Activated CD4-positive, alpha-beta memory T cell treated with anti-CD3 and anti-CD28 coated beads for 36 hours (primary cell): ENCODE measurements at regions of chr17 and their contacts with region 1.

Region 1: GRCh38 chr17:416293-417206 is 63.9 kb upstream of the RPH3AL start:
- DNase-seq: peak; percentile 77
- H3K4me3 Mint-ChIP-seq: peak overlapping the region; percentile 83
- H3K27ac Mint-ChIP-seq: peak overlapping the region; percentile 96
- H3K4me1 Mint-ChIP-seq: peaks cover 76% of the 10 kb centered on the region
- H3K27me3 Mint-ChIP-seq: no peaks in the 10 kb centered on the region

Region 2: DNA sequence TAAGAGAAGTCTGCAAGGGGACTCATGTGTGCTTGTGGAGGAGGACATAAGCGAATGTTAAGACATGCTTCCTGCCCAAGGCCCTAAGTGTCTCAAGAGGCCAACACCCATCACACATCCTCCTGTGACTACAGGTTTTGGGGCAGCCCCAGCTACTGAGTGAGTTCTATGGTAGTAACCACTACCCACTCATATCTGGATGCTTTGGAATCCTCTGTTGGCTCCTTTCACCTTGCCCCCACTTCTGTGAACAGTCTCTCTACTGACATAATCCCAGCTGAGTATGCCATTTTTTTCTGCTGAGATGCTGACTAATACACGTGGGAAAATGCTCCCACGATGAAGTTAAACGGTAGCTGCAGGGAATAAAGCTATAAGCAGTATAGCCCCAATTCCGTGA is 144.6 kb after region 1 on chr17:
- CTCF ChIA-PET with region 1: interaction called, 8 read pairs
- POLR2A ChIA-PET with region 1: no interaction called
- intact Hi-C with region 1: loop called (anchors 1 kb)
- DNase-seq: peak; percentile 72
- H3K4me3 Mint-ChIP-seq: no peak overlapping the region
- H3K27ac Mint-ChIP-seq: peak overlapping the region; percentile 71
- H3K4me1 Mint-ChIP-seq: peaks cover 22% of the 10 kb centered on the region
- H3K27me3 Mint-ChIP-seq: no peaks in the 10 kb centered on the region

Region 3: GRCh38 chr17:640436-640835 is 223.9 kb after region 1 on chr17:
- CTCF ChIA-PET with region 1: interaction called, 5 read pairs
- POLR2A ChIA-PET with region 1: interaction called, 3 read pairs
- intact Hi-C with region 1: loop called (anchors 2 kb)
- DNase-seq: no peak
- H3K4me3 Mint-ChIP-seq: no peak overlapping the region
- H3K27ac Mint-ChIP-seq: no peak overlapping the region
- H3K4me1 Mint-ChIP-seq: peaks cover 16% of the 10 kb centered on the region
- H3K27me3 Mint-ChIP-seq: no peaks in the 10 kb centered on the region

Region 4: DNA sequence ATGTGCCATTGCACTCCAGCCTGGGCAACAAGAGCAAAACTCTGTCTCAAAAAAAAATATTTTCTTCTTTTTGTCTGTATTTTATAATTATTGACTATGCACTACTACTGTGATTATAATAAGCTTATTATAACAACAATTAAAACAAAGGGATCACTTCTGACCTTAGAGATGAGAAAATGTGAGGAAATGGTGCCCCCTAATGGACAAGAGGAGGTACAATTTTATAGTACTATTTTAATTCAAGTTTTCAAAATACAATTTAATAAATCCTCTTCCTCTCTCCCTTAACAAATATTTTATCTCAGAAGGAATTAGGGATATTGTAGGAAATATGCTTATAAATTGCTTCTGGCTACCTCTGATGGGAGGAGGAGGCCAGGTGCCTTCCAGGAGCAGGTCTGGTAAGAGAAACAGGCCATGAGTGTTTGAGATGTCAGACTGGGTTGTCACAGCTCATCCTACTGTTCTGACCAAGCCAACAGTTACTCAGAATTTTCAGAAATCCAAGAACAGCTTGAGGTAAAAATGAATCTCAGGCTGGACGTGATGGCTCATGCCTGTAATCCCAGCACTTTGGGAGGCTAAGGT is 284.0 kb after region 1 on chr17:
- CTCF ChIA-PET with region 1: interaction called, 133 read pairs
- POLR2A ChIA-PET with region 1: interaction called, 5 read pairs
- intact Hi-C with region 1: loop called (anchors 1 kb)
- DNase-seq: no peak
- H3K4me3 Mint-ChIP-seq: no peak overlapping the region
- H3K27ac Mint-ChIP-seq: no peak overlapping the region
- H3K4me1 Mint-ChIP-seq: peaks cover 4% of the 10 kb centered on the region
- H3K27me3 Mint-ChIP-seq: no peaks in the 10 kb centered on the region